Motor neuron (in vitro differentiated cells): ENCODE measurements at regions of chr4 and their contacts with region 1.

Region 1: GRCh38 chr4:169485791-169486742 is 126.3 kb downstream of the NEK1 start:
- ATAC-seq: peak; percentile 33 to 71 (median 60)
- H3K4me3 ChIP-seq: no peak overlapping the region
- H3K27ac ChIP-seq: no peak overlapping the region
- H3K4me1 ChIP-seq: peaks cover 0 to 2% of the 10 kb centered on the region in 2 donors

Region 2: GRCh38 chr4:168923526-168924194 is 562.4 kb before region 1 on chr4:
- in situ Hi-C with region 1: loop called in 4 of 9 experiments (anchors 10 to 25 kb)
- ATAC-seq: peak; percentile 73 to 99 (median 85)
- H3K4me3 ChIP-seq: no peak overlapping the region
- H3K27ac ChIP-seq: no peak overlapping the region
- H3K4me1 ChIP-seq: peaks cover 0 to 23% of the 10 kb centered on the region in 2 donors

Region 3: GRCh38 chr4:168942985-168943384 is 543.1 kb before region 1 on chr4:
- in situ Hi-C with region 1: loop called in 2 of 9 experiments (anchors 25 kb)
- ATAC-seq: no peak
- H3K4me3 ChIP-seq: no peak overlapping the region
- H3K27ac ChIP-seq: no peak overlapping the region
- H3K4me1 ChIP-seq: no peaks in the 10 kb centered on the region

Region 4: GRCh38 chr4:169010125-169011023 is 475.7 kb before region 1 on chr4 and contains the start of gene CBR4:
- in situ Hi-C with region 1: loop called in 1 of 9 experiments (anchors 25 kb)
- ATAC-seq: peak; percentile 93 to 98 (median 97)
- H3K4me3 ChIP-seq: peak within 1 kb of the TSS; percentile 57 to 89 (median 64)
- H3K27ac ChIP-seq: peak within 1 kb of the TSS; percentile 87 to 92
- H3K4me1 ChIP-seq: peaks cover 10 to 20% of the 10 kb centered on the region in 2 donors
- total RNA-seq, gene CBR4: 21.6 to 64.6 (median 30.4) TPM

Region 5: DNA sequence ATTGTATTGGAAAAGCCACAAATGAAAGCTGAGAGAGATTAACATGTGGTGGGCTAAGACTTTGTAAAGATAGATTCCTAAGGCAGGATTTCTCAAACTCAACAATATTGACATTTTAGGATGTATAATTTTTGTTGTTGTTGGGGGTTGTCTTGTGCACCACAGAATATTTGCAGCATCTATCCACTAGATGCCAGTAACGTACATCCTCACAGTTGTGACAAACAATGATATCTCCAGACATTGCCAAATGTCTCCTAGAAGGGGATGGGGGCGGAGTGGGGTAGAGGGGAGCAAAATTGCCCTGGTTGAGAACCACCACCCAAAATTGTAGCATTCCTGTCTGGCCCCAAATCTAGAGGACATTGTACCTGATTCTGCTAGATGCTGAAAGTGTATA is 461.3 kb before region 1 on chr4:
- in situ Hi-C with region 1: loop called in 2 of 9 experiments (anchors 10 to 25 kb)
- ATAC-seq: peak; percentile 48 to 93 (median 80)
- H3K4me3 ChIP-seq: no peak overlapping the region
- H3K27ac ChIP-seq: no peak overlapping the region
- H3K4me1 ChIP-seq: peaks cover 0 to 2% of the 10 kb centered on the region in 2 donors

Region 6: DNA sequence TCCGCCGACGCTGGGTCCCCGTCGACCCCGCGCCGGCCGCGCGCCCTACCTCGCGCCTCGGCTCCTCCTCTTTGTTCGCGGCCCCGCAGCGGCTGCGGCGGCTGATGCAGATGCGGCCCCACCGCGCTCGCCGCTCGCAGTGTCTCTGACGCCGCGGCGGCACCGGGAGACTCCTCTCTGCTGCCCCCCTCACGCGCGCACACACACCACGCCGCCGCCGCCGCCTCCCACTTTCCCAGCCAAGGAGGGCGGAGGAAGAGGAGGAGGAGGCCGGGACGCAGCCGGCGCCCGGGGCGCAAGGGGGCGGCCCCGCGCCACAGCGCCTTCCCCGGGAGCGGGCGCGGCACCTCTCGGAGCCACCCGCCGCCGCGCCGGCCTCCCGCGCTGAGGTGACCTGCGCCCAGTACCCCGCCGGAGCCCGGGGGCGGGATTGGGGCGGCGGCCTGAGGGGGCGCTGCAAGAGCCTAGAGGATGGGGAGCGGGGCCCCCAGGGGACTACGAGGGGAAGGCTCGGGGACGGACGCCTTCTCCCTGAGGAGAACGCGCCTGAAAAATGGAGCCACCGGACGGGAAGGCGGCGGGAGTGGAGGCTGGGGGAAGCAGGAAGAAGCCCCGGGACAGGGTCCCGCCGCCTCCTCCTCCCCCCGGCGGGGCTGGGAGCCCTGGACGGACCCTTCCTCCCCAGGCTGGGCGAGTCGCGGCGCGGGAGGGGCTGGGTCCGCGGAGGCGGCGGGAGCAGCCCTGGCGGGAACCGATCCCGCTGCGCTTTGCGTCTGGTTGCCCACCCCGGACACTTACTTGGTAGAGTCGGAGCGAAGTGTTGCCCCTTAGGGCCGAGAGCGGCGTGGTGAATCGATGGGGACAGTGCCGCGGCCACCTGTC is 215.0 kb before region 1 on chr4 and contains the start of gene SH3RF1:
- in situ Hi-C with region 1: loop called in 1 of 9 experiments (anchors 25 kb)
- ATAC-seq: peak; percentile 86 to 91 (median 88)
- H3K4me3 ChIP-seq: peak within 1 kb of the TSS; percentile 54 to 96 (median 92)
- H3K27ac ChIP-seq: peak within 1 kb of the TSS; percentile 78 to 83
- H3K4me1 ChIP-seq: peaks cover 8 to 25% of the 10 kb centered on the region in 2 donors
- total RNA-seq, gene SH3RF1: 6.7 to 20.2 (median 14.3) TPM

Region 7: GRCh38 chr4:169963998-169964397 is 477.9 kb after region 1 on chr4:
- in situ Hi-C with region 1: no loop called
- ATAC-seq: no peak
- H3K4me3 ChIP-seq: no peak overlapping the region
- H3K27ac ChIP-seq: no peak overlapping the region
- H3K4me1 ChIP-seq: peaks cover 0 to 10% of the 10 kb centered on the region in 2 donors

Region 8: GRCh38 chr4:170391066-170391740 is 905.1 kb after region 1 on chr4:
- in situ Hi-C with region 1: no loop called
- ATAC-seq: no peak
- H3K4me3 ChIP-seq: no peak overlapping the region
- H3K27ac ChIP-seq: no peak overlapping the region
- H3K4me1 ChIP-seq: no peaks in the 10 kb centered on the region